ENCODE measurements at regions of chr5 and their contacts with region 1.

Region 1: GRCh38 chr5:97162045-97162444 is 19.6 kb upstream of the LIX1 start:
- DNase-seq: peak; percentile 70
- ATAC-seq: peak; percentile 49
- H3K4me3 Mint-ChIP-seq: no peak overlapping the region
- H3K27ac Mint-ChIP-seq: no peak overlapping the region
- H3K4me1 Mint-ChIP-seq: peaks cover 16% of the 10 kb centered on the region
- H3K27me3 Mint-ChIP-seq: no peaks in the 10 kb centered on the region

Region 2: GRCh38 chr5:96614110-96614691 is 547.8 kb before region 1 on chr5:
- CTCF ChIA-PET with region 1: interaction called, 14 read pairs
- POLR2A ChIA-PET with region 1: no interaction called
- intact Hi-C with region 1: loop called (anchors 1 to 2 kb)
- DNase-seq: peak; percentile 69
- ATAC-seq: peak; percentile 86
- H3K4me3 Mint-ChIP-seq: no peak overlapping the region
- H3K27ac Mint-ChIP-seq: no peak overlapping the region
- H3K4me1 Mint-ChIP-seq: peaks cover 5% of the 10 kb centered on the region
- H3K27me3 Mint-ChIP-seq: peaks cover 17% of the 10 kb centered on the region

Region 3: DNA sequence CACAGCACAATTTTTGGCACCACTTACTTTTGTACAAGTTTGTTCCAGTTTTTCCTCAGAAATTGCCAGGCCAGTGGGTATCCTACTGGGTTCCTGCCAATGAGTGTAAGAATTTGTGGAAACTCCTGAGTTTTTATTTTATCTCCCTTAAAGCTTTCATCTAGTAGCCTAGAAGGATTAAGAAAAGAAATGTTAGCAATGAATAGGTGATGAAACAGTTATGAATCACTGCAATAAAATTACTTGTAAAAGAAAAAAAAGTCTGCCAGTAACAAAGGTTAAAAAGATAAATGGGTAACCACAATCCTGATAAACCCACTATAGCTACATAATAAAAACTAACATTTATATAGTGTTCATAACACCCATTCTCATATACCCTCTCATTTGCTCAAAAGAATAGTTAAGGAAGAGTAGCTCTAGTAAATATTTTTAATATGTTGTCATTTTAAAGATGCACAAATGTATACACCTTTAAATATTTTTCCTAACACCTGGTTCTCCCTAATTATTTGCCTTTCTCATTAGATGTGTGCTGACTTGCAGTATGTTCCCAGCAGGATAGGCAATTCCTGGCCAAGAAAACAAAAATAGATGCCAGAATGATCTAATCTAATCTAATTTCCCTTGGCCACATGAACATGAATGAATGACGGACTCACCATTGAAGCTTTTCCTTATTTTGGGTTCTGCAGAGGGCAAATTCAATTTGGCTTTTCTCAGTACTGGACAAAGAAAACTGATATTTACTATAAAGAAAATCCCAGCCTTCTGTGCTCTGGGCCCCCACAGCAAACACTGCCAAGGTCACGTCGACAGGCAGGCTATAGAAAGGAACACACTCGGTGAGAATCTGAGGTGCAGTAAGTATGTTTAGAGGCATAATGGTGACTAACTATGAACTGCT is 380.8 kb before region 1 on chr5:
- CTCF ChIA-PET with region 1: interaction called, 17 read pairs
- POLR2A ChIA-PET with region 1: no interaction called
- intact Hi-C with region 1: no loop called
- DNase-seq: no peak
- ATAC-seq: no peak
- H3K4me3 Mint-ChIP-seq: no peak overlapping the region
- H3K27ac Mint-ChIP-seq: peak overlapping the region; percentile 40
- H3K4me1 Mint-ChIP-seq: peaks cover 7% of the 10 kb centered on the region
- H3K27me3 Mint-ChIP-seq: no peaks in the 10 kb centered on the region

Region 4: GRCh38 chr5:96868603-96869371 is 293.3 kb before region 1 on chr5:
- CTCF ChIA-PET with region 1: interaction called, 160 read pairs
- POLR2A ChIA-PET with region 1: no interaction called
- intact Hi-C with region 1: loop called (anchors 1 kb)
- DNase-seq: no peak
- ATAC-seq: peak; percentile 81
- H3K4me3 Mint-ChIP-seq: no peak overlapping the region
- H3K27ac Mint-ChIP-seq: peak overlapping the region; percentile 90
- H3K4me1 Mint-ChIP-seq: peaks cover 54% of the 10 kb centered on the region
- H3K27me3 Mint-ChIP-seq: peaks cover 1% of the 10 kb centered on the region

Region 5: DNA sequence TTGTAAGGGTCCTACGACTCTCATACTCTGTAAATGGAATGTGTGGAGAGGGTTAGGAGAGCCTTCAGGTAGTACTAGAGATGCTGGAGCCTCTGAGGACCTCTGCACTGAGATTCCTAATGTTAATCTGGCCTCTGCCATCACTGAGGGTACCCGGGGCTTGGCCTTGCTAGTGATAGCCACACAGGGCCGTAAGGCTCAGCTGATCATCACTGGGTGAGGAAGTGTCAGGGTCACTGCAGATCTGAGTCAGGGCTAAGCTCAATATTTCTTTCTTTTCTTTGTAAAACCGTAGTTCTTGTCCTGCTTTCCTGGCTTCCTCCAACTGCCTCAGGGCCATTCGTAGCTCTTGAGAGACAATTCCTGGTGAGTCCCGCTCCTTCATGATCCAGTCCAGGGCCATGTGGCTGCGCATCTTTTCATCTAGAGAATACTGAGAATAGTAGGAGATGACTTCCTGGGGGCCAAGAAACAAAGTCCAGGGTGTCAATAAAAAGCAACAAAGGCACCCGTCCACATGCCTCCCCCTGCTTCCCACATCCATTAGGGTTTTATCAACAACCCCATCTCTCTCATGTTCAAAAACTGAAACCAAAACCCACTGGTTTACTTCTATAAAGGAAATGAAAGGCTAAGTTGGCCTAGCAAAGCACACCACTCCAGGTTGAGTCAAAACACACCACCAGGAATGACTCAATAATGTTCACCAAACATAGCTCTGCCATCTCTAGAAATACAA is 67.3 kb before region 1 on chr5:
- CTCF ChIA-PET with region 1: interaction called, 17 read pairs
- POLR2A ChIA-PET with region 1: no interaction called
- intact Hi-C with region 1: no loop called
- DNase-seq: peak; percentile 59
- ATAC-seq: peak; percentile 99
- H3K4me3 Mint-ChIP-seq: no peak overlapping the region
- H3K27ac Mint-ChIP-seq: peak overlapping the region; percentile 15
- H3K4me1 Mint-ChIP-seq: peaks cover 16% of the 10 kb centered on the region
- H3K27me3 Mint-ChIP-seq: peaks cover 10% of the 10 kb centered on the region

Region 6: GRCh38 chr5:97149709-97150108 is 12.3 kb before region 1 on chr5:
- CTCF ChIA-PET with region 1: interaction called, 42 read pairs
- POLR2A ChIA-PET with region 1: no interaction called
- intact Hi-C with region 1: no loop called
- DNase-seq: no peak
- ATAC-seq: no peak
- H3K4me3 Mint-ChIP-seq: no peak overlapping the region
- H3K27ac Mint-ChIP-seq: no peak overlapping the region
- H3K4me1 Mint-ChIP-seq: no peaks in the 10 kb centered on the region
- H3K27me3 Mint-ChIP-seq: no peaks in the 10 kb centered on the region

Measured in activated CD4-positive, alpha-beta T cell treated with anti-CD3 and anti-CD28 coated beads for 36 hours (primary cell).